A549 (cell line): ENCODE measurements at regions of chr15 and their contacts with region 1.

Region 1: GRCh38 chr15:33700695-33701304 is 267.5 kb upstream of the CHRM5 start:
- DNase-seq: peak; percentile 58 to 85
- ATAC-seq: peak; percentile 92 to 97
- H3K4me3 ChIP-seq: no peak overlapping the region
- H3K27ac ChIP-seq: no peak overlapping the region
- H3K4me1 ChIP-seq: no peaks in the 10 kb centered on the region
- CTCF ChIP-seq: peak; percentile 95
- EP300 ChIP-seq: no peak
- POLR2A ChIP-seq: no peak
- RAD21 ChIP-seq: peak; percentile 88 to 89

Region 2: DNA sequence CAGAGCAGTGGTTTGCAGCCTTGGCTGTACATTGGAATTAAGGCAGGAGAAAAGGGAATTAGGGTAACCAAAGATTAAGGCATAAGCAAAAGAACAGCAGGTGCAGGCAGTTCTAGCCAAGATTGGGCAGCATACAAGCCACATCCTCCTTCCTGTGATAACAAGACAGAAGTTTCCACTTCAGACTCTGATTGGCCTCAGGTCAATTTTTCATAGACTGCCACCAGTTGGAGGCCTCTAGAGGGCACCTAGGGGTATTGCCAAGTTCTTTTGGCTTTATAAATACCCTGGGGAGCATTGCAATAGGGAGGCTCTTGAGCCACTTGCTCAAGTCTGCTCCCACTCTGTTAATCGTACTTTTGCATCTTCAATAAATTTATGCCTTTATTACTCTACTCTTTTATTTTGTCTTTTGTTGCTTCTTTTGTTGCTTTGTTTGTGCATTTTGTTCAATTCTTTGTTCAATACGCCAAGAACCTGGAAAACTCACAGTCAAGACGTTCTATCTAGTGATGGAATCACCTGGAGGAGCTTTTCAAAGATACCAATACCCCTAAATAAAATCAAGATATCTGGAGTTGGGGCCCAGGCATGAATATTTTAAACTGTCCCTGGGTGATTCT is 474.1 kb before region 1 on chr15:
- CTCF ChIA-PET with region 1: interaction called, 61 read pairs
- POLR2A ChIA-PET with region 1: no interaction called
- DNase-seq: peak; percentile 85 to 86
- ATAC-seq: peak; percentile 88 to 97
- H3K4me3 ChIP-seq: no peak overlapping the region
- H3K27ac ChIP-seq: no peak overlapping the region
- H3K4me1 ChIP-seq: no peaks in the 10 kb centered on the region
- CTCF ChIP-seq: peak; percentile 57
- EP300 ChIP-seq: no peak
- POLR2A ChIP-seq: no peak
- RAD21 ChIP-seq: peak; percentile 37 to 39; a peak in 4 of 5 replicates

Region 3: GRCh38 chr15:33256874-33257273 is 443.9 kb before region 1 on chr15:
- CTCF ChIA-PET with region 1: interaction called, 12 read pairs
- POLR2A ChIA-PET with region 1: no interaction called
- DNase-seq: no peak
- ATAC-seq: no peak
- H3K4me3 ChIP-seq: no peak overlapping the region
- H3K27ac ChIP-seq: no peak overlapping the region
- H3K4me1 ChIP-seq: no peaks in the 10 kb centered on the region
- CTCF ChIP-seq: no peak
- EP300 ChIP-seq: no peak
- POLR2A ChIP-seq: no peak
- RAD21 ChIP-seq: no peak

Region 4: GRCh38 chr15:33298631-33299030 is 402.2 kb before region 1 on chr15:
- CTCF ChIA-PET with region 1: interaction called, 159 read pairs
- POLR2A ChIA-PET with region 1: interaction called, 4 read pairs
- DNase-seq: no peak
- ATAC-seq: no peak
- H3K4me3 ChIP-seq: no peak overlapping the region
- H3K27ac ChIP-seq: no peak overlapping the region
- H3K4me1 ChIP-seq: no peaks in the 10 kb centered on the region
- CTCF ChIP-seq: no peak
- EP300 ChIP-seq: no peak
- POLR2A ChIP-seq: no peak
- RAD21 ChIP-seq: no peak

Region 5: GRCh38 chr15:33679061-33679460 is 21.7 kb before region 1 on chr15:
- CTCF ChIA-PET with region 1: interaction called, 31 read pairs
- POLR2A ChIA-PET with region 1: no interaction called
- DNase-seq: no peak
- ATAC-seq: no peak
- H3K4me3 ChIP-seq: no peak overlapping the region
- H3K27ac ChIP-seq: no peak overlapping the region
- H3K4me1 ChIP-seq: no peaks in the 10 kb centered on the region
- CTCF ChIP-seq: no peak
- EP300 ChIP-seq: no peak
- POLR2A ChIP-seq: no peak
- RAD21 ChIP-seq: no peak

Region 6: DNA sequence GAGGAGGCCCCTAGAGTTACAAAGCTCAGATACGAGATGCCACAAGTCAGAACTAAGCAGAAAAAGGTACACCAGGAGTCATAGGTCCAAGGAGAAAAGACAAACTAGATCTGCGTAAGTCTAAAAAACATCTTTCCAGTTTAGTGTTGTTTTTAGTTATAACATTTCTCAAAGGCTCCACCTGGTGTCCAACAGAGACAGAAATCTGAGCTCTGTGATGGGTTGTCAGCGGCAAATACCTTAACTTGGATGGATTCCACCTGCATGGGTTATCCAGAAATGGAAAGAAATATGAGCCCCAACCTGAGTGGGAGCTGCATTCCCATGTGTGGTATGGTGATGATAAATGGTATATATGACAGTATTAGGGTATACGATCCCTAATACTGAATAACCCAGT is 28.9 kb after region 1 on chr15:
- CTCF ChIA-PET with region 1: interaction called, 55 read pairs
- POLR2A ChIA-PET with region 1: no interaction called
- DNase-seq: peak; percentile 25 to 36
- ATAC-seq: peak; percentile 52 to 63; a peak in 4 of 6 replicates
- H3K4me3 ChIP-seq: no peak overlapping the region
- H3K27ac ChIP-seq: no peak overlapping the region
- H3K4me1 ChIP-seq: no peaks in the 10 kb centered on the region
- CTCF ChIP-seq: peak; percentile 57
- EP300 ChIP-seq: no peak
- POLR2A ChIP-seq: no peak
- RAD21 ChIP-seq: peak; percentile 37 to 49; a peak in 3 of 5 replicates